ENCODE measurements at regions of chr6 and their contacts with region 1.

Region 1: DNA sequence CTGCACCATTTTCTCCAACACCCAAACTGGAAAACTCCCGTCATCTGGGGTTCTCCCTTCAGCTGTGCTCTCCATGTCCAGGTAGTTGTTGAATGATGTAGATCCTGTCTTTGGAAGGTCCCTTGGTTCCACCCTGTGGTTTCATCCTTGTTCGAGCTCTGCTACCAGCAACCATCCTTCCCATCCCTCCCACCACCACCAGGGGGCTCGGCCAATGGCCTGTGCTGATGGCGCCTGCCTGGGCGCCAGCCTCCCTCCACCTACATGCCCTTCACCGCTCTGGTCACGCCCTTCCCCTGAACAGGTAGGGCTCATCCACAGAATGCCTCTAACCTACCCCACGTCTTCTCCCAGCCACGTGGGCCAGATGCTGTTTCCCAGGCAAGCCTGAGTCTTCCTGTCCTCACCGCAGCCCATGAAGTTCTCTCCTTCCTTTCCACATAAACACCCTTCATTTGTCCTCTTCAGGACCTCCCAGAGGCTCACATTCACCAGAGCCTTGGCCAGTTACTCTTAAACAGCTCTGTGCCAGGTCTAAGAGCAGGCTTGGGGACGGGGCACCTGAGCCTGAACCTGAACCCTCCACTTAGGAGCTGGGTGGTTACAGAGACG is 75.1 kb upstream of the DUSP22 start:
- DNase-seq: no peak
- H3K4me3 ChIP-seq: no peak overlapping the region
- H3K4me3 Mint-ChIP-seq: peak overlapping the region in 2 of 7 donors; percentile 13 to 67
- H3K27ac ChIP-seq: no peak overlapping the region
- H3K27ac Mint-ChIP-seq: peak overlapping the region in 6 of 8 donors; percentile 2 to 58 (median 40)
- H3K4me1 ChIP-seq: peaks cover 8% of the 10 kb centered on the region
- H3K4me1 Mint-ChIP-seq: peaks cover 30 to 48% (median 31%) of the 10 kb centered on the region in 3 donors
- H3K27me3 ChIP-seq: no peaks in the 10 kb centered on the region
- H3K27me3 Mint-ChIP-seq: no peaks in the 10 kb centered on the region

Region 2: GRCh38 chr6:227074-227782 is 10.1 kb after region 1 on chr6:
- CTCF ChIA-PET with region 1: interaction called, 14 read pairs
- POLR2A ChIA-PET with region 1: no interaction called
- DNase-seq: no peak
- H3K4me3 ChIP-seq: no peak overlapping the region
- H3K4me3 Mint-ChIP-seq: no peak overlapping the region
- H3K27ac ChIP-seq: no peak overlapping the region
- H3K27ac Mint-ChIP-seq: peak overlapping the region in 1 of 8 donors; percentile 43
- H3K4me1 ChIP-seq: peaks cover 16% of the 10 kb centered on the region
- H3K4me1 Mint-ChIP-seq: peaks cover 18 to 41% (median 34%) of the 10 kb centered on the region in 3 donors
- H3K27me3 ChIP-seq: no peaks in the 10 kb centered on the region
- H3K27me3 Mint-ChIP-seq: peaks cover 2 to 5% of the 10 kb centered on the region in 2 donors

Measured in CD8-positive, alpha-beta memory T cell (primary cell).